Aorta (tissue), 5 donors: ENCODE measurements at regions of chr10 and their contacts with region 1.

Region 1: DNA sequence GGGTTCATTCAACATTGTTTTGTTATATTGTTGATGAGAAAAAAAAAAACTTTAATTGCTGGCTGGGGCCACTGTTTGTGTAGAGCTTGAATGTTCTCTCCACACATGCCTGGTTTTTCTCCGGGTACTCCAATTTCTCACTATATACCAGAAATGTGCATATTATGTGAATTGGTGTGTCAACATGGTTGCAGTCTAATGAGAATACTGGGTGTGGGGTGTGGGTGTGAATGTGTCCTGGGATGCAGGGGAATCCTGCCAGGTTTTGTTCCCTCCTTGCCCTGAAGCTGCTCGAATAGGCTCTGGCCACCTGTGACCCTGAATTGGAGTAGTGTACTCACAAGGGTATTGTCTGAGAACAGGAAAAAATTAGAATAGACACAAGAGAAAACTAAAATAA is 81.4 kb downstream of the VIM start:
- DNase-seq: no peak
- ATAC-seq: no peak
- H3K4me3 ChIP-seq: no peak overlapping the region
- H3K27ac ChIP-seq: no peak overlapping the region
- H3K4me1 ChIP-seq: no peaks in the 10 kb centered on the region
- H3K27me3 ChIP-seq: no peaks in the 10 kb centered on the region

Region 2: DNA sequence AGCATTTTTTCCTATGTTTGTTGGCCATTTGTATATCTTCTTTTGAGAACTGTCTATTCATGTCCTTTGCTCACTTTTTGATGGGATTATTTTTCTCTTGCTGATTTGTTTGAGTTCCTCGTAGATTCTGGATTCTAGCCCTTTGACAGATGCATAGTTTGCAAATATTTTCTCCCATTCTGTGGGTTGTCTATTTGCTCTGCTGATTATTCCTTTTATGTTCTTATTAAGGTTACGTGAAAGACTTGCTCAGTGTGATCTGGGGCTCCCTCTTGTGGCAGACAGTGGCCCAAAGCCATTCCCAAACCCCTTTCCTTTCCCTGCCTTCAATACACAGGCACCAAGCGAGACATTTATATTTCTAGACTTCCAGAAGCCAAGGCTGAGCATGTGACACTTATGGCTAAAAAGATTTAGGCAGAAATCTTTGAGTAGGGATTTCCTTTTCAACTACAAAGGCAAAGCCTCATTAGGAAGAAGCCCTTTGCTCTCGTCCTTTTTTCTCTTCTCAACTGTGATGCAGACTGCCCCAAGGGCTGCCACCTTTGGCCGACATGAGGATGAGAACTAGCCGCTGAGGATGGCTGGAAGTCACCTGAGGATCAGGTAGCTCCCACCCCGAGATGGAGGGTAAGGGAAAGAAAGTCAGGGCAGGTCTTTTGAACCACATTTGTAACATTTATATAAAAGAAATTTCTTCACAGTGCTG is 121.4 kb after region 1 on chr10:
- intact Hi-C with region 1: loop called in 1 of 2 experiments (anchors 10 kb)
- DNase-seq: peak; percentile 79 to 88
- ATAC-seq: peak; percentile 78
- H3K4me3 ChIP-seq: no peak overlapping the region
- H3K27ac ChIP-seq: no peak overlapping the region
- H3K4me1 ChIP-seq: no peaks in the 10 kb centered on the region
- H3K27me3 ChIP-seq: no peaks in the 10 kb centered on the region